ENCODE measurements at regions of chr11 and their contacts with region 1.

Region 1: GRCh38 chr11:1694064-1694845 is 2.7 kb upstream of the KRTAP5-6 start:
- DNase-seq: peak; percentile 88 to 94
- ATAC-seq: peak; percentile 96 to 99 (median 98)
- H3K4me3 ChIP-seq: peak overlapping the region; percentile 35
- H3K27ac ChIP-seq: no peak overlapping the region
- H3K4me1 ChIP-seq: peaks cover 6% of the 10 kb centered on the region
- H3K27me3 ChIP-seq: peaks cover 0 to 4% (median 0%) of the 10 kb centered on the region in 3 donors
- CTCF ChIP-seq: peak; percentile 93

Region 2: DNA sequence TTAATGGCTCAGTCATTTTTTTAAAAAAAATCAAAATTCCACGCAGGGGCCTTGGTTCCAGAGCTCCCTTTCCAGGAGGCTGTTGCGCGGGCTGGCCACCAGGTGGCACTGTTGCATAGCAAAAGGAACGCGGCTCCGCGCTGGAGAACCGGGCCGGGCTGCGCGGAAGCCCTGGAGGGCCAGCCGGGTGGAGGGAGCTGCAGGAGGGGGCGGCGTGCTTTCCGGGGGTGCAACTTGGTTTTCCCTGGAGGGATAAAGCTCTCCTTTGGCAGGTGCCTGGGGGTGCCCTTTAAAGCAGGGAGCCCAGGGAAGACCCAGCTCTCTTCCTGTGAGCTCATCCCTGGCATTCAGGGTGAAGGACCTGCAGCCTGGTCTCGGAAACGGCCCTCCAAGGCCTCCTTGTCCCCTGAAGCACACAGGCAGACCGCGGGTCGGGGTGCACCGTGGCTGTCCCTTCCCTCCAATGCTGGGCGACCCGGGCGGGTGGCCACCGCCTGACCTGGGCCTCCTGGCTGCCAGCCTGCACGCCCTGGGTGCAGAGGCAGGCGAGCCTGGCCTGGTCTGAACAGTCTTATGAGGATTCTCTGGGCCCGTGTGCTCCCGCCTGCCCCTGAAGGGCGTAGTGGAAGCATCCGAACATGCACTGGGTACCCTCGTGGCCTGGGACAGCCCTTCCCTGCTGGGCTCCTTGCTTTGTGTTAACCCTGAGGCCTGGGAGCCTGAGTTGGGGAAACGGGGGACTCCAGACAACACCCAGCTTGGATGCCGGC is 41.3 kb before region 1 on chr11:
- intact Hi-C with region 1: loop called in 1 of 2 experiments (anchors 5 kb)
- DNase-seq: peak; percentile 77 to 87
- ATAC-seq: peak; percentile 79 to 95 (median 92)
- H3K4me3 ChIP-seq: no peak overlapping the region
- H3K27ac ChIP-seq: no peak overlapping the region
- H3K4me1 ChIP-seq: no peaks in the 10 kb centered on the region
- H3K27me3 ChIP-seq: peaks cover 0 to 3% (median 2%) of the 10 kb centered on the region in 3 donors
- CTCF ChIP-seq: peak; percentile 98

Region 3: GRCh38 chr11:1832211-1832919 is 138.1 kb after region 1 on chr11:
- intact Hi-C with region 1: loop called (anchors 1 to 2 kb)
- DNase-seq: peak; percentile 66 to 78
- ATAC-seq: peak; percentile 71 to 92 (median 74)
- H3K4me3 ChIP-seq: peak overlapping the region; percentile 33
- H3K27ac ChIP-seq: no peak overlapping the region
- H3K4me1 ChIP-seq: peaks cover under 1% of the 10 kb centered on the region
- H3K27me3 ChIP-seq: peaks cover 0 to 6% (median 5%) of the 10 kb centered on the region in 3 donors
- CTCF ChIP-seq: peak; percentile 99

Region 4: GRCh38 chr11:1882519-1883238 is 188.4 kb after region 1 on chr11:
- intact Hi-C with region 1: loop called in 1 of 2 experiments (anchors 5 kb)
- DNase-seq: peak; percentile 85 to 93
- ATAC-seq: peak; percentile 86 to 94 (median 92)
- H3K4me3 ChIP-seq: no peak overlapping the region
- H3K27ac ChIP-seq: peak overlapping the region; percentile 84
- H3K4me1 ChIP-seq: peaks cover 20% of the 10 kb centered on the region
- H3K27me3 ChIP-seq: no peaks in the 10 kb centered on the region
- CTCF ChIP-seq: peak; percentile 94